Activated CD8-positive, alpha-beta T cell treated with anti-CD3 and anti-CD28 coated beads, Interleukin-2, amount 10 ng/mL, durations not matched to agents 7 days and 5 days (primary cell): ENCODE measurements at regions of chr17 and their contacts with region 1.

Region 1: GRCh38 chr17:40362696-40363110 is 1.8 kb downstream of the GJD3 start:
- DNase-seq: peak; percentile 93
- ATAC-seq: peak; percentile 93
- H3K4me3 Mint-ChIP-seq: peak overlapping the region; percentile 72
- H3K27ac Mint-ChIP-seq: no peak overlapping the region
- H3K4me1 Mint-ChIP-seq: peaks cover 41% of the 10 kb centered on the region
- H3K27me3 Mint-ChIP-seq: peaks cover 13% of the 10 kb centered on the region

Region 2: DNA sequence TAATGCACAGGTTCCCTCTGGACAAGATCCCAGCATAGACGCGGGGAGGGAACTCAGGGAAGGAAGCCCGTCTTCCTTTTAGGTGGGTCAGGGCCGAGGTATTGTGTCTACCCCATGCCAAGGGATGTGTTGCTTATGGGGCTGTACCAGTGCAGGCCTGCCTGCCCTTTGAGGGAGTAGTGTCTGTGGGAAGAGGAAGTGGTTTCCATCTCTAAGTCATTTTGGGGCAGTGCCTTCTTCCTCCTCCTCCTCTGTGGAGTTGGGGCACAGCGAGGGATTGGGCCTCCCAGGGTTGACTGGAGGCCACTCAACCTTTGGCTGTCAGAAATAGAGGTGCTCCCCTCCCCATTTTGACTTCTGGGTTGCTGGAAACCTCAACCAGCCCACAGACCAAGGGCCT is 24.6 kb before region 1 on chr17:
- CTCF ChIA-PET with region 1: no interaction called
- POLR2A ChIA-PET with region 1: no interaction called
- DNase-seq: no peak
- ATAC-seq: no peak
- H3K4me3 Mint-ChIP-seq: peak overlapping the region; percentile 22
- H3K27ac Mint-ChIP-seq: peak overlapping the region; percentile 71
- H3K4me1 Mint-ChIP-seq: peaks cover 78% of the 10 kb centered on the region
- H3K27me3 Mint-ChIP-seq: no peaks in the 10 kb centered on the region

Region 3: DNA sequence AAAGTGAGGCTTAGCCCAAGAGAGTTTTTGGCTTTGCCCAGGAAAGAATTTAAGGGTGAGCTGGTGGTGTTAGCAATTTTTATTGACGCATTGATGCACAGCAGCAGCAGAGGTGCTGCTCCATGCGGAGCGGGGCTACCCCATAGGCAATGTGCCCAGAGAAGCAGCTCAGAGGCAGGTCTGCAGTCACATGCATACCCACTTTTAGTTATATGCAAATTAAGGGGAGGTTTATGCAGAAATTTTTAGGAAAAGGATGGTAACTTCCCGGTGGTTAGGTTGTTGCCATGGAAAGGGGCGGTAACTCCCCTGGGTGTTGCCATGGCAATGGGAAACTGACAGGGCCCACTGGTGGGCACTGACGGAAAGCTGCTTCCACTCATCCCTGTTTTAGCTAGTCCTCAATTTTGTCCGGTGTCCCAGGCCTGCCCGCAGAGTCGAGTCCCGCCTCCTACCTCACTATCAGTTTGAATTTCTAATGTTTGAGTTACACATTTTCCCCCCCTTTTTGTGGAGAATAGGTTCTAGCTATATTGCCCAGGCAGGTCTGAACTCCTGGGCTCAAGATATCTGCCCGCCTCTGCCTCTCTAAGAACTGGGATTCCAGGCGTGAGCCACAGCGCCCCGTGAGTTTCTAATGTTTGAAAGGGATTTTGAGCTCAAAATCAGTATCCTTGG is 12.3 kb after region 1 on chr17:
- CTCF ChIA-PET with region 1: interaction called, 16 read pairs
- POLR2A ChIA-PET with region 1: interaction called, 7 read pairs
- DNase-seq: no peak
- ATAC-seq: no peak
- H3K4me3 Mint-ChIP-seq: no peak overlapping the region
- H3K27ac Mint-ChIP-seq: no peak overlapping the region
- H3K4me1 Mint-ChIP-seq: peaks cover 26% of the 10 kb centered on the region
- H3K27me3 Mint-ChIP-seq: peaks cover 4% of the 10 kb centered on the region

Region 4: GRCh38 chr17:40427002-40427491 is 64.3 kb after region 1 on chr17:
- CTCF ChIA-PET with region 1: interaction called, 11 read pairs
- POLR2A ChIA-PET with region 1: no interaction called
- DNase-seq: peak; percentile 63
- ATAC-seq: peak; percentile 93
- H3K4me3 Mint-ChIP-seq: peak overlapping the region; percentile 3
- H3K27ac Mint-ChIP-seq: peak overlapping the region; percentile 83
- H3K4me1 Mint-ChIP-seq: peaks cover 36% of the 10 kb centered on the region
- H3K27me3 Mint-ChIP-seq: peaks cover 11% of the 10 kb centered on the region

Region 5: DNA sequence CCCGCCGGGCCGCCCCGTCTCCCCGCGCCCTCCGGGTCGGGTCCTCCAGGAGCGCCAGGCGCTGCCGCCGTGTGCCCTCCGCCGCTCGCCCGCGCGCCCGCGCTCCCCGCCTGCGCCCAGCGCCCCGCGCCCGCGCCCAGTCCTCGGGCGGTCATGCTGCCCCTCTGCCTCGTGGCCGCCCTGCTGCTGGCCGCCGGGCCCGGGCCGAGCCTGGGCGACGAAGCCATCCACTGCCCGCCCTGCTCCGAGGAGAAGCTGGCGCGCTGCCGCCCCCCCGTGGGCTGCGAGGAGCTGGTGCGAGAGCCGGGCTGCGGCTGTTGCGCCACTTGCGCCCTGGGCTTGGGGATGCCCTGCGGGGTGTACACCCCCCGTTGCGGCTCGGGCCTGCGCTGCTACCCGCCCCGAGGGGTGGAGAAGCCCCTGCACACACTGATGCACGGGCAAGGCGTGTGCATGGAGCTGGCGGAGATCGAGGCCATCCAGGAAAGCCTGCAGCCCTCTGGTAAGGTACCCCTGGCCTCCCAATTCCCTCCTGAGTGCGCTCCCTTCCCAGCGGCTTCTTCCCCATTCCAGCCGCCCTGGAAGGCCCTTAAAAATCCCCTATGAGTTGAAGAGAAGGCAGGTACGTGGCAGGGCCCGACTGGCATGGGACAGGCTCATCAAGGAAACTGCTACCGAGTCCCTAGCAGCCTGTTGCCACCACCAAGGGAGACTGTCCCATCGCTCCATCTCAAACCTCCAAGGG is 81.1 kb after region 1 on chr17:
- CTCF ChIA-PET with region 1: interaction called, 10 read pairs
- POLR2A ChIA-PET with region 1: no interaction called
- DNase-seq: peak; percentile 79
- ATAC-seq: peak; percentile 83
- H3K4me3 Mint-ChIP-seq: peak overlapping the region; percentile 82
- H3K27ac Mint-ChIP-seq: peak overlapping the region; percentile 92
- H3K4me1 Mint-ChIP-seq: peaks cover 59% of the 10 kb centered on the region
- H3K27me3 Mint-ChIP-seq: peaks cover 2% of the 10 kb centered on the region

Region 6: GRCh38 chr17:40536295-40537171 is 173.8 kb after region 1 on chr17:
- CTCF ChIA-PET with region 1: interaction called, 187 read pairs
- POLR2A ChIA-PET with region 1: interaction called, 12 read pairs
- DNase-seq: no peak
- ATAC-seq: no peak
- H3K4me3 Mint-ChIP-seq: no peak overlapping the region
- H3K27ac Mint-ChIP-seq: peak overlapping the region; percentile 39
- H3K4me1 Mint-ChIP-seq: peaks cover 100% of the 10 kb centered on the region
- H3K27me3 Mint-ChIP-seq: no peaks in the 10 kb centered on the region